K562 (cell line): ENCODE measurements at regions of chr15 and their contacts with region 1.

Region 1: DNA sequence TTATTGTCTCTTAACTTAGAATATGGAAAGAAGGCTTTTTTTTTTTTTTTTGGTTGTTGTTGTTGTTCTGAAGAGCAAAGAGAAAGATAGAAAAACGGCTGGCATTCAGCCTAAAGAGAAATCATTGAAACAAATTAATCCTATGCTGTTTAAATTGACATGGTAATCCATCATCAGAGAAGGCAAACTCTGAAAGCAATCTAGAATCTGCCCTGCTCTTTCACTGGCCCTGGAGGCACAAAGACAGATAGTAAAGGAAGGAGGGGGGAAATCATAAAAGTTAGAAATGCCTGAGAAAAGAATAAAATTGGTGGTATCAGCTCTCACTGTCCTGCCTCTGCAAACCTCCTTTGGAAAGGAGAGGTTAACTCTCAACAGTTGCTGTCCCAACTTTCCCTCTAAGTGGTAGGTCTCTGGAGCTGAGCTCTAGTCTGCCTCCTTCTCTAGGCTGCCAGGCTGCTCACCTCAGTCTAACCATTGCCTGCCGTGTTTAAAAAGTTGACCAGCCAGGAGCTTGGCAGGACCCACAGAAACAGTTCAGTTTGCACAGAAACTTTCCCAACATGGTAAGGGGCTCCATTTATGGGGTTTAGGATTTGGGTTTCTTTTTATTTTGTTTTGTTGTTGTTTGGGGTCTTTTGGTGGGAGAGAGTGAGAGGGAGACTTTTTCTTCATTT is 13.4 kb upstream of the NR2F2 start:
- DNase-seq: peak in 2 of 4 experiments; percentile 31 to 36
- ATAC-seq: peak; percentile 88
- H3K4me3 ChIP-seq: no peak overlapping the region
- H3K27ac ChIP-seq: peak overlapping the region; percentile 33
- H3K4me1 ChIP-seq: peaks cover 4 to 10% of the 10 kb centered on the region in 2 experiments; a peak in 3 of 5 replicates
- H3K27me3 ChIP-seq: no peaks in the 10 kb centered on the region
- CTCF ChIP-seq: no peak
- EP300 ChIP-seq: no peak
- POLR2A ChIP-seq: no peak
- RAD21 ChIP-seq: no peak

Region 2: GRCh38 chr15:96053031-96053780 is 263.9 kb before region 1 on chr15:
- CTCF ChIA-PET with region 1: no interaction called
- POLR2A ChIA-PET with region 1: no interaction called
- in situ Hi-C with region 1: no loop called
- intact Hi-C with region 1: loop called (anchors 5 kb)
- DNase-seq: peak; percentile 31 to 82 (median 35)
- ATAC-seq: peak; percentile 63
- H3K4me3 ChIP-seq: peak overlapping the region; percentile 20
- H3K27ac ChIP-seq: peak overlapping the region; percentile 73
- H3K4me1 ChIP-seq: peaks cover 11 to 35% of the 10 kb centered on the region in 2 experiments
- H3K27me3 ChIP-seq: no peaks in the 10 kb centered on the region
- CTCF ChIP-seq: no peak
- EP300 ChIP-seq: 0 out of 2 replicates have a peak, but pooled peaks have one; percentile 13
- POLR2A ChIP-seq: no peak
- RAD21 ChIP-seq: no peak